Caco-2 (cell line): ENCODE measurements at regions of chr5 and their contacts with region 1.

Region 1: GRCh38 chr5:83473346-83474163 is 2.0 kb downstream of the VCAN start:
- DNase-seq: peak; percentile 78 to 81
- H3K4me3 ChIP-seq: peak overlapping the region; percentile 50
- H3K4me3 Mint-ChIP-seq: peak overlapping the region; percentile 83
- H3K27ac Mint-ChIP-seq: peak overlapping the region; percentile 53
- H3K4me1 ChIP-seq: peaks cover 25% of the 10 kb centered on the region
- H3K4me1 Mint-ChIP-seq: peaks cover 30% of the 10 kb centered on the region
- H3K27me3 ChIP-seq: no peaks in the 10 kb centered on the region
- H3K27me3 Mint-ChIP-seq: peaks cover 7% of the 10 kb centered on the region
- CTCF ChIP-seq: peak; percentile 57 to 68

Region 2: GRCh38 chr5:82351754-82352145 is 1121.8 kb before region 1 on chr5:
- CTCF ChIA-PET with region 1: no interaction called
- POLR2A ChIA-PET with region 1: no interaction called
- intact Hi-C with region 1: loop called (anchors 5 kb)
- DNase-seq: peak in 1 of 2 experiments; percentile 60
- H3K4me3 ChIP-seq: no peak overlapping the region
- H3K4me3 Mint-ChIP-seq: no peak overlapping the region
- H3K27ac Mint-ChIP-seq: no peak overlapping the region
- H3K4me1 ChIP-seq: no peaks in the 10 kb centered on the region
- H3K4me1 Mint-ChIP-seq: peaks cover 8% of the 10 kb centered on the region
- H3K27me3 ChIP-seq: no peaks in the 10 kb centered on the region
- H3K27me3 Mint-ChIP-seq: no peaks in the 10 kb centered on the region
- CTCF ChIP-seq: peak; percentile 66

Region 3: DNA sequence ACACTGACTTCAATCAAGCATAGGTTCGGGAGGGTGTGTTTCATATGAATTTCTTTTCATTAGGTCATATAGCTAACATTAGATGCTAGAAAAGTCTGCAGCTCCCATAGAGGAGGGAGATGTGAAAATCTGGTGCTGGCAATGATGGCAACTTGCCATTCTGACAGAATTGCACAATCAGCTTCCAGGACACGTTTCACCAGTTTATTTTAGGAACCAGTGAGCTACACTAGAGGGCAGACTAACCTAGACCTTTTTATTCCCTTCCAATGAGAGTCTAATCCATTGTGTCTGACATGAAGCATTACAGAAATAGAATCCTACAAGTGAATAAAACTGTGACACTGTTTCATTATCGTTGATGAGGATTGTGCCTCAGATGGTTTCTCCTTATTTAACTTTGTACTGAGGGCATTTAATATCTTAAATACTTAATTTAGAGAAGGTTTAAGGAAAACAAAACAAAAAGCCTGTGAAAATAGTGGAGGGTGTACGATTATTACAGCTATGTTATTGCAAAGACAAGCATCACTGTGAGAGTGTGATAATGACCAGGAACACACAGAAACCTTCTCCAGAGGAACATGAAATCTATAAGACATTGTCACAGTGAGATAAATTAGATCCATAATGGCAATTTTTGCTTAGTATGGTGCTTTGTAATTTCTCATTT is 832.1 kb before region 1 on chr5:
- CTCF ChIA-PET with region 1: no interaction called
- POLR2A ChIA-PET with region 1: no interaction called
- intact Hi-C with region 1: loop called (anchors 2 kb)
- DNase-seq: peak in 1 of 2 experiments; percentile 64
- H3K4me3 ChIP-seq: no peak overlapping the region
- H3K4me3 Mint-ChIP-seq: no peak overlapping the region
- H3K27ac Mint-ChIP-seq: no peak overlapping the region
- H3K4me1 ChIP-seq: peaks cover under 1% of the 10 kb centered on the region
- H3K4me1 Mint-ChIP-seq: peaks cover 4% of the 10 kb centered on the region
- H3K27me3 ChIP-seq: no peaks in the 10 kb centered on the region
- H3K27me3 Mint-ChIP-seq: no peaks in the 10 kb centered on the region
- CTCF ChIP-seq: peak; percentile 65 to 68

Region 4: GRCh38 chr5:83124593-83124992 is 349.0 kb before region 1 on chr5:
- CTCF ChIA-PET with region 1: no interaction called
- POLR2A ChIA-PET with region 1: no interaction called
- intact Hi-C with region 1: loop called (anchors 1 kb)
- DNase-seq: peak in 1 of 2 experiments; percentile 39
- H3K4me3 ChIP-seq: no peak overlapping the region
- H3K4me3 Mint-ChIP-seq: no peak overlapping the region
- H3K27ac Mint-ChIP-seq: no peak overlapping the region
- H3K4me1 ChIP-seq: peaks cover 21% of the 10 kb centered on the region
- H3K4me1 Mint-ChIP-seq: peaks cover 18% of the 10 kb centered on the region
- H3K27me3 ChIP-seq: no peaks in the 10 kb centered on the region
- H3K27me3 Mint-ChIP-seq: no peaks in the 10 kb centered on the region
- CTCF ChIP-seq: no peak

Region 5: DNA sequence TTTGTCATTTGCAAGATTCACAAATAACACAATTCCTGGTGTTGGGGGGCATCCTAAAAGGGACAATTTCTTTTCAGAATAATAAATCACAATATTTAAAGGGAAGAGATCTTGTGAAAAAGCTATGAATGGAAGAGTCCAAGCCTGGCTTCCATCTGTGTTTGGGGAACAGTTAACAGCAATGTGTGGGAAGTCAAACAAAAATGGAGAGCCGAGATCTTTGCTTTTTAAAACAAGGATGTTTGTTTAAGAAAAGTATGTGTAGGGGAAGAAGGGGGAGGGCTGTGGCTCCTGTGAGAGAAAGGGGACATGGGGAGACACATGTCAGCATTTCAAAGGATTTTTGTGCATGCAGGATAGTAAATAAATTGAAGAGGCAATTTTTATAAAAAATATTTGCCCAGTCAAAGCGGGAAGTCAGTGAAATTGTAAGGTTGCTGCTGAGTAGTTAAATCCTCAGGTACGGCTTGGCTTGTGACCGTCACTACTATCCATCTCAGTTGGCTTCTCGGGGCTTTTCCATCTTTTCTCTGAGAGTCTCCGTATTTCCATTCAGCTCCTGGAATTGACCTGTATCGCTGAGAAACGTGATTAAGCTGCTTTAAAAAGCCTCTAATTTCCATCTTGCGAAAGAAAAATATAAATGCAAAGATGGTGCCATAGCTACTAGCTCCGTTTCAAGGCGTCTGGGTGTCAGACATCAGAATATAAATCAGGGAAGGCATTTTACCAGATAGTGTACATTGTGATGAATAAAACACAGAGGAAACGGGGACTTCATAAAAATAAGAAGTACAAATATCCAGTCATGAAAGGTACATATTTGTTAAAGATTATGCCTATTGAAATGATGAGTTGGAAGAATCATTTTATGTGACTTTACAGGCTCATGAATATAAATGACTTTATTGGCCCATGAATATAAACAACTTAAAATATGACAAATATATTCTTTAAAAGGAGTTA is 54.9 kb before region 1 on chr5:
- CTCF ChIA-PET with region 1: no interaction called
- POLR2A ChIA-PET with region 1: no interaction called
- intact Hi-C with region 1: no loop called
- DNase-seq: no peak
- H3K4me3 ChIP-seq: peak overlapping the region; percentile 1; the same call in 1 of the 2 replicates
- H3K4me3 Mint-ChIP-seq: peak overlapping the region; percentile 55
- H3K27ac Mint-ChIP-seq: no peak overlapping the region
- H3K4me1 ChIP-seq: no peaks in the 10 kb centered on the region
- H3K4me1 Mint-ChIP-seq: peaks cover 8% of the 10 kb centered on the region
- H3K27me3 ChIP-seq: no peaks in the 10 kb centered on the region
- H3K27me3 Mint-ChIP-seq: no peaks in the 10 kb centered on the region
- CTCF ChIP-seq: no peak

Region 6: DNA sequence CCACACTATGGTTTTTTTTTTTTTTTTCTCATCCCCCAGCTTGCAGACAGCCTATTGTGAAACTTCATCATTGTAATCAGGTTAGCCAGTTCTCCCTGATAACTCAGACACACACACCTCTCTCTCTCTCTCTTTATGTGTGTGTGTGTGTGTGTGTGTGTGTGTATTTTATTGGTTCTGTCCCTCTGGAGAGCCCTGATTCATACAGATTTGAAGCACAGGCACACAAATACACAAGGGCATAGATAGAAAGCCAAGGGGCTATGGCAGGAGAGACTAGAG is 22.6 kb before region 1 on chr5:
- CTCF ChIA-PET with region 1: no interaction called
- POLR2A ChIA-PET with region 1: no interaction called
- intact Hi-C with region 1: loop called (anchors 1 kb)
- DNase-seq: no peak
- H3K4me3 ChIP-seq: no peak overlapping the region
- H3K4me3 Mint-ChIP-seq: peak overlapping the region; percentile 16
- H3K27ac Mint-ChIP-seq: peak overlapping the region; percentile 80
- H3K4me1 ChIP-seq: no peaks in the 10 kb centered on the region; the same call in 1 of the 2 replicates
- H3K4me1 Mint-ChIP-seq: peaks cover 16% of the 10 kb centered on the region
- H3K27me3 ChIP-seq: no peaks in the 10 kb centered on the region
- H3K27me3 Mint-ChIP-seq: no peaks in the 10 kb centered on the region
- CTCF ChIP-seq: no peak